Pancreas (tissue), 10 donors: ENCODE measurements at regions of chr5 and their contacts with region 1.

Region 1: DNA sequence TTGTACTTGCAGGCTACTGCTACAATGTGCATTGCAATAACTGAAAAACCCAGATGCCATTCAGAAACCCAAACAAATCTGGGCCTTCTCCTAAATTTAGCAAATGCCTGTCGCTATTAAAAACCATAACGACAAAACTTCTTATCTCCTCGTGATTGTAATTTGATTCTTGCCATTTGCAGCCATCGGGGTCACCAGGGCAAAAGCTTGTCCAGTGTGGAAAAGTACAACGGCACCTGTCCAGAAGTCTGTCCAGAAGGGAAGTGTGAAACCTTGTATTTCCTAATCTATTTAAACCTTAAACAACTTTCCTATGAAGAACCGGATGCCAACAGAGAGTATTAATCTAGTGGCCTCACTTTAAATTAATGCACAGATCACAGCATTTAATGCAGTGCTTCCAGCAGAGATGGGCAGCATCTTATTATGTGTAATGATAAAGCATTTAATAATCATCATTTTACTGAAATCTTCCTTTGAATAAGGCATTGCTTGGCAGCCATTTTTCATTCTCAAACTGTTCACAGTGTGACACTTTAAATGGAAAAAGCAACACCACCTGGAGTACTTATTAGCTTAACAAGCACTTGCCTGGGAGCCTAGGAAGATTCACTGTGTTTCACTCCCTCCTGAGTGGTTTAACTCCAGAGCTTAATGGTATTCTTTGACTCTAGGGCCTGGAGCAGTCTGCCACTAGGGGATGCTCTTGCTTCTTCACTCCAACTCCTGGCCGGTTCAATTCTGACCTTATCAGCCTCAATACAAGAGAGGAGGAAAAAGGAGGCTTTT is 4.9 kb upstream of the C7 start:
- DNase-seq: peak in 4 of 6 donors; percentile 26 to 75 (median 60)
- ATAC-seq: peak; percentile 90 to 97 (median 96)
- H3K4me3 ChIP-seq: no peak overlapping the region
- H3K27ac ChIP-seq: peak overlapping the region in 2 of 4 donors; percentile 23 to 37
- H3K4me1 ChIP-seq: peaks cover 9 to 11% (median 10%) of the 10 kb centered on the region in 3 donors
- H3K27me3 ChIP-seq: no peaks in the 10 kb centered on the region
- CTCF ChIP-seq: peak; percentile 44 to 92 (median 82)

Region 2: GRCh38 chr5:41524174-41524573 is 619.8 kb after region 1 on chr5:
- intact Hi-C with region 1: loop called in 1 of 3 experiments (anchors 10 kb)
- DNase-seq: no peak
- ATAC-seq: no peak
- H3K4me3 ChIP-seq: no peak overlapping the region
- H3K27ac ChIP-seq: no peak overlapping the region
- H3K4me1 ChIP-seq: no peaks in the 10 kb centered on the region
- H3K27me3 ChIP-seq: no peaks in the 10 kb centered on the region
- CTCF ChIP-seq: no peak